ENCODE measurements at regions of chr11 and their contacts with region 1.

Region 1: DNA sequence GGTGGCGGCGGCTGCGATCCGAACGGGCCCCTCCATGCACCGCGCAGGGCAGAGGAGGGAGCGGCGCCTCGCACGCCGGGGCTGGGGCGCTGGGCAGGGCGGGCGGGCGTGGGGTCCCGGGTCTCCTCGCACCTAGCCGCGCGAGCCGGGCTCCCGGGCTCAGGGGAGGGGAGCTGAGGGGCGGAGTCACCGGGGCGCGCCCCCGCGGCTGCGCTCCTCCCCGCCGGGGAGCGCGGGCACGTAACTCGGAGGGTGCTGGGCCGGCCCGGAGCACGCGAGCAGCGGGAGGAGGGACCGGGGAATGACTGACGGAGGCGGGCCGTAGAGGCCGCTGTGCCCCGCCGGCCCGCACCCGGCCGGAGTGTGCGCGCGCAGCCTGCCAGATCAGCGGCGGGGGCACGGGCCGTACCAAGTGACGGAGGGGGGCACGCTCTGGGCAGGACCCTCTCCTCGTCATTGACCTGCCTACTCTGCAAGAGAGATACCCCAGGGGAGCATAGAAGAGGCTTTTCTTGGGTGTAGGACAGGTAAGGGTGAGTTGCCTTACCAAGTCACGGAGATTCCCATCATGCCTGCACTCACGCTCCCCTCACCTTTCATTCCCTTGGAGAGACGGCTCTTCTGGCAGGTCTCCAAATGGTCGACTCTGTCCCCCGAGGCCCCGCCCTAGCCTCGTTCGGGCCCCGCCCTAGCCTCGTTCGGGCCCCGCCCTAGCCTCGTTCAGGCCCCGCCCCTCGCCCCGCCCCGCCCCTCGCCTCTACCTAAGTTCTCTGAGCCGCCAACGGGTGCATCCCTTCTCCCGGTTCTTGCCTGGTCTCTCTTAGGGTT is at the start of gene CDON:
- DNase-seq: peak; percentile 48
- ATAC-seq: peak; percentile 97
- H3K4me3 ChIP-seq: peak within 1 kb of the TSS; percentile 72
- H3K27ac ChIP-seq: peak within 1 kb of the TSS; percentile 91
- H3K4me1 ChIP-seq: no peaks in the 10 kb centered on the region
- H3K27me3 ChIP-seq: peaks cover 1 to 14% of the 10 kb centered on the region in 2 experiments
- CTCF ChIP-seq: peak in 1 of 3 experiments; percentile 17; a peak in 1 of 6 replicates
- EP300 ChIP-seq: no peak
- POLR2A ChIP-seq: peak; percentile 59; the same call in 1 of the 2 replicates
- RAD21 ChIP-seq: no peak
- polyA plus RNA-seq, gene CDON: 0.07 to 0.21 TPM

Region 2: GRCh38 chr11:125941619-125942611 is 121.0 kb before region 1 on chr11:
- CTCF ChIA-PET with region 1: interaction called, 29 read pairs
- POLR2A ChIA-PET with region 1: no interaction called
- RAD21 ChIA-PET with region 1: interaction called, 11 read pairs
- SMC1A ChIA-PET with region 1: interaction called, 34 read pairs
- in situ Hi-C with region 1: no loop called
- intact Hi-C with region 1: no loop called
- DNase-seq: no peak
- ATAC-seq: peak; percentile 96
- H3K4me3 ChIP-seq: no peak overlapping the region
- H3K27ac ChIP-seq: no peak overlapping the region
- H3K4me1 ChIP-seq: no peaks in the 10 kb centered on the region
- H3K27me3 ChIP-seq: no peaks in the 10 kb centered on the region; a peak in 1 of 4 replicates
- CTCF ChIP-seq: peak; percentile 73 to 87 (median 83)
- EP300 ChIP-seq: no peak
- POLR2A ChIP-seq: no peak
- RAD21 ChIP-seq: peak; percentile 67

Region 3: DNA sequence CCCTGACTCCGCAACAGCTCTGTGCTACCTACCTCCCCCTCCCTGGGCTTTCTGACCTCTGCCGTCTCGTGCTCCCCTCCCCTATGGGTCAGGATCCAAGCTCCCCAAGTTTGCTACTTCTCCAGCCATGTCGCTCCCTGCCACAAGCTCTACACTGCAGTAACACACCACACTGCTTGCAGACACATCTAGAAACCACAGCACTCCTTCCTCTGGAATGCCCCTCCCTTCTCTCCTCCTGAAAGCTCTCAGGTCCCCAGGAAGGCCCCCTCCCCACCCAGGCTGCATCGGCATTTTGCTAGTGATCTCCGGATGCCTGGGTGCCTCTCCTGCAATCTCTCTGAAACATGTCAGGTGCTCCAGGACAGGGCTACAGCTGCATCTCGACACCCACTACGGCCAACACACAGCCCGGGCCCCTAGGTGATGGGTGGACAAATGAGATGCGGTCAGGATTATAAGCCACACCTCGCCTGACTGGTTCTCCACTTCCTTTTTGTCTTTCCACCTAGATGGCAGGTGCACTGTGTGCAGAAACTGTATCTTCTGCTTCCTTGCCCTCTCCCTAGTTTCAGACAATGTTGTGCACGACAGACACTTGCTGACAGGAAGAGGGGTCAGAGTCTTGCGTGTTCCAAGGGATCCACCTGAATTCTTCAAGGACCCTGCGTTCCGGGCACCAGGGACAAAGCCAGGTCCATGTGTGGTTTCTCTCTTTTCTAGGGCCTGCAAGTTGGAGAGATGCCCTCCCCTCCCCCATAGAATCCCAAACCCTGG is 125.6 kb after region 1 on chr11:
- CTCF ChIA-PET with region 1: interaction called, 10 read pairs
- POLR2A ChIA-PET with region 1: no interaction called
- RAD21 ChIA-PET with region 1: interaction called, 3 read pairs
- SMC1A ChIA-PET with region 1: interaction called, 7 read pairs
- in situ Hi-C with region 1: no loop called
- intact Hi-C with region 1: loop called (anchors 2 kb)
- DNase-seq: peak; percentile 64
- ATAC-seq: peak; percentile 92
- H3K4me3 ChIP-seq: peak overlapping the region; percentile 45; the same call in 1 of the 2 replicates
- H3K27ac ChIP-seq: peak overlapping the region; percentile 66
- H3K4me1 ChIP-seq: peaks cover 30% of the 10 kb centered on the region
- H3K27me3 ChIP-seq: no peaks in the 10 kb centered on the region
- CTCF ChIP-seq: no peak
- EP300 ChIP-seq: peak in 1 of 2 experiments; percentile 79; a peak in 3 of 4 replicates
- POLR2A ChIP-seq: no peak
- RAD21 ChIP-seq: no peak

Region 4: DNA sequence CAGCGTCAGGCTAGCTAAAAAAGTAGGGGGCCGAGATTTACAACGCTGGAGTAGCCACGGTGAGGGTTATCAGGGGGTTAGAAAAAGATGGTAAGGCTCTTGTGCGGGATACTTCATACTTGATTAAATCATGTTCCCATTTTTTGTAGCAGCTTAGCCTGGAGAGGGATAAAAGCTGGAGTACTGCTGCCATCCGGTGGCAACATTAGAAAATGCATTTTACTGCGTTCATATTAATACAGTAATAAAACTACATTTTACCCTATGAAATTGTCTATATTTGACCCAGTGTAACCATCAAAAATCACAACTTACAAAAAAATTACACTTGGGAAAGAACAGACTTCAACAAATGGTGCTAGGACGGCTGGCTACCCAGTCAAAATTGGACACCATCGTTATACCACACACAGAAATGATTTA is 131.2 kb after region 1 on chr11:
- CTCF ChIA-PET with region 1: interaction called, 10 read pairs
- POLR2A ChIA-PET with region 1: no interaction called
- RAD21 ChIA-PET with region 1: interaction called, 3 read pairs
- SMC1A ChIA-PET with region 1: interaction called, 7 read pairs
- in situ Hi-C with region 1: no loop called
- intact Hi-C with region 1: loop called (anchors 2 kb)
- DNase-seq: no peak
- ATAC-seq: peak; percentile 56
- H3K4me3 ChIP-seq: no peak overlapping the region
- H3K27ac ChIP-seq: no peak overlapping the region
- H3K4me1 ChIP-seq: peaks cover 14% of the 10 kb centered on the region
- H3K27me3 ChIP-seq: no peaks in the 10 kb centered on the region
- CTCF ChIP-seq: peak; percentile 43 to 70 (median 54); a peak in 5 of 6 replicates
- EP300 ChIP-seq: no peak
- POLR2A ChIP-seq: no peak
- RAD21 ChIP-seq: peak; percentile 83

Measured in GM12878 (cell line).